ENCODE measurements at regions of chr6 and their contacts with region 1.

Region 1: DNA sequence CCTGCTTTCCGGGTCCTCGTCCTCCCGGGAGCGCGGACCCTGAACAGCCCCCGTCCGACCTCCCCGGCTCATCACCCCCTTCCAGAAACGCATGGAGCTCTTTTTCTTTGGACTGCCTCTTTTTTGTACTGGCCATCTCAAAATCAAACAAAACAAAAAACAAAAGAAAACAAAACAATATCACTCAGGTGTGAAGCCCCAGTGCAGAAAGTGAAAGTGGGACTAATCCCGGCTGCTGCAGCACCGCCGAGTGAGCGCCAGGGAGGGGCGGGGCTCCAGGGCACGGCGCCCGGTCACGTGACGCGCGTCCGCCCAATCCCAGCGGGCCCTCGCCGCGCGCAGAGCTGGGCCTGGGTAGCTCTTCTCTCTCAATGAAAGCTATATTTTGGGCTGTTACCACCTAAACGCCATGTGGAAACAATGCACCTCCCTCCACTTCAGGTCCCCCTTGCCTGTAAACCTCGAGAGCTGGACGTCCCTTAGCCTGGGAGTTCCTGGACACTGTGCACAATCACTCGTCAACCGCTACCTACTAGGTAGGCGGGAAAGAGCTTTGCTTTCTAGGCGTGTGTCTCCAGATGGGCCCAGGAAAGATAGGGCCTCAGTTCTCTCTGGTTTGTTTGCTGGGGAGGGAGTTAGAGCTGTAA is 93.7 kb upstream of the PRDM1 start:
- DNase-seq: peak; percentile 94
- ATAC-seq: peak; percentile 93
- H3K4me3 ChIP-seq: peak overlapping the region; percentile 81 to 96 (median 89)
- H3K4me3 Mint-ChIP-seq: peak overlapping the region; percentile 90
- H3K27ac ChIP-seq: peak overlapping the region; percentile 91
- H3K27ac Mint-ChIP-seq: peak overlapping the region; percentile 94
- H3K4me1 ChIP-seq: peaks cover 26 to 28% of the 10 kb centered on the region in 2 donors
- H3K4me1 Mint-ChIP-seq: peaks cover 26% of the 10 kb centered on the region
- H3K27me3 ChIP-seq: peaks cover 4 to 34% (median 22%) of the 10 kb centered on the region in 4 experiments
- H3K27me3 Mint-ChIP-seq: peaks cover 57% of the 10 kb centered on the region
- CTCF ChIP-seq: no peak

Region 2: DNA sequence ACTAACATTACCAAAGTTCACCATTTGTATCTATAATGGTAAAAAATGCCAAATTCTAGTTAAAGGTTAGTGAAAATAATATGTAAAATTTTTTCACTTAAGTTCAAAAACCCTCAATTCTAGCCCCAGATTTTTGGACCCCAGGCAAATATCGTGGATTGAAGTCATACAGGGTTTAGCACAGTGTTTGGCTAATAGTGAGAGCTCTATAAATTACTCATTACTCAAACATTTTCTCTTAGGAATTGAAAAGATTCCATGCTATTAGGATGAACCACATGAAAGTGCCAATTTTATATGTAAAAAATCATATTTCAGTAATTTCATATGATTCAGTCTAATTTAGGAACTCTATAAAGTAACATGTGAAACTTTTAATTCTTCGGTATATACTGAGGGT is 419.3 kb before region 1 on chr6:
- CTCF ChIA-PET with region 1: no interaction called
- POLR2A ChIA-PET with region 1: no interaction called
- intact Hi-C with region 1: no loop called
- DNase-seq: no peak
- ATAC-seq: no peak
- H3K4me3 ChIP-seq: no peak overlapping the region
- H3K4me3 Mint-ChIP-seq: no peak overlapping the region
- H3K27ac ChIP-seq: no peak overlapping the region
- H3K27ac Mint-ChIP-seq: no peak overlapping the region
- H3K4me1 ChIP-seq: no peaks in the 10 kb centered on the region
- H3K4me1 Mint-ChIP-seq: no peaks in the 10 kb centered on the region
- H3K27me3 ChIP-seq: peaks cover 0 to 4% (median 0%) of the 10 kb centered on the region in 4 experiments
- H3K27me3 Mint-ChIP-seq: peaks cover 23% of the 10 kb centered on the region
- CTCF ChIP-seq: no peak

Region 3: DNA sequence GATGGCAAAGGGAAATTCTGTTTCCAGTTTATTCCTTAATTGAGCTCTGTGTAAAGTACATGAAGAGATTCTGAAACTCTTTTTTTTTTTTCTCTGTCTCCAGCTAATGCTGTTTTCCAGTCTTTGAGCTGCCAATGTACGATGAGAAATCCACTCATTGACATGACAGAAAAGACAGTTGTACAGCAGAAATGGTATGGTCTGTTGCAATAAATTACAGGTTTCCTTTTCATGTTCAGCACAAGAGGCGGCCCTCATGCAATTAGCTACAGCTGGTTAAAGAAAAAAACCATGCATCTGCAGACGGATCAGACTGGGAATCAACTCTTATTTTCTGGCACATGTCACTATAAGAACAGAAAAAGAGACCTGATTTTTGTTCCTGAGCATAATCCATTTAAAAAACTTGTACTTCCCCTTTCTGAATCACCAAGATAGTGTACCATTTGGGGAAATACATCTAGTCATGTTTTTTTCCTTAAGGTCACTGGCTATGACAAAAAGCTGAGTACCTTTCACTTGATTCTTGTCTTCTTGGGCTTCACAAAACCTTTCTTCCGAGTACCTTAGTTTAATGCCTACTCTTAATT is 299.7 kb before region 1 on chr6:
- CTCF ChIA-PET with region 1: no interaction called
- POLR2A ChIA-PET with region 1: no interaction called
- intact Hi-C with region 1: no loop called
- DNase-seq: no peak
- ATAC-seq: no peak
- H3K4me3 ChIP-seq: no peak overlapping the region
- H3K4me3 Mint-ChIP-seq: no peak overlapping the region
- H3K27ac ChIP-seq: no peak overlapping the region
- H3K27ac Mint-ChIP-seq: no peak overlapping the region
- H3K4me1 ChIP-seq: no peaks in the 10 kb centered on the region
- H3K4me1 Mint-ChIP-seq: no peaks in the 10 kb centered on the region
- H3K27me3 ChIP-seq: peaks cover 0 to 3% (median 1%) of the 10 kb centered on the region in 4 experiments
- H3K27me3 Mint-ChIP-seq: peaks cover 14% of the 10 kb centered on the region
- CTCF ChIP-seq: no peak

Region 4: GRCh38 chr6:105733565-105734162 is 258.8 kb before region 1 on chr6:
- CTCF ChIA-PET with region 1: interaction called, 3 read pairs
- POLR2A ChIA-PET with region 1: no interaction called
- intact Hi-C with region 1: loop called (anchors 5 kb)
- DNase-seq: peak; percentile 50
- ATAC-seq: no peak
- H3K4me3 ChIP-seq: no peak overlapping the region
- H3K4me3 Mint-ChIP-seq: no peak overlapping the region
- H3K27ac ChIP-seq: no peak overlapping the region
- H3K27ac Mint-ChIP-seq: no peak overlapping the region
- H3K4me1 ChIP-seq: no peaks in the 10 kb centered on the region
- H3K4me1 Mint-ChIP-seq: no peaks in the 10 kb centered on the region
- H3K27me3 ChIP-seq: no peaks in the 10 kb centered on the region
- H3K27me3 Mint-ChIP-seq: no peaks in the 10 kb centered on the region
- CTCF ChIP-seq: peak; percentile 76

Region 5: GRCh38 chr6:105793130-105793529 is 199.3 kb before region 1 on chr6:
- CTCF ChIA-PET with region 1: interaction called, 4 read pairs
- POLR2A ChIA-PET with region 1: no interaction called
- intact Hi-C with region 1: loop called (anchors 2 kb)
- DNase-seq: peak; percentile 67
- ATAC-seq: peak; percentile 73
- H3K4me3 ChIP-seq: no peak overlapping the region
- H3K4me3 Mint-ChIP-seq: no peak overlapping the region
- H3K27ac ChIP-seq: no peak overlapping the region
- H3K27ac Mint-ChIP-seq: no peak overlapping the region
- H3K4me1 ChIP-seq: peaks cover 9 to 15% of the 10 kb centered on the region in 2 donors
- H3K4me1 Mint-ChIP-seq: peaks cover 22% of the 10 kb centered on the region
- H3K27me3 ChIP-seq: no peaks in the 10 kb centered on the region
- H3K27me3 Mint-ChIP-seq: no peaks in the 10 kb centered on the region
- CTCF ChIP-seq: peak; percentile 21

Region 6: DNA sequence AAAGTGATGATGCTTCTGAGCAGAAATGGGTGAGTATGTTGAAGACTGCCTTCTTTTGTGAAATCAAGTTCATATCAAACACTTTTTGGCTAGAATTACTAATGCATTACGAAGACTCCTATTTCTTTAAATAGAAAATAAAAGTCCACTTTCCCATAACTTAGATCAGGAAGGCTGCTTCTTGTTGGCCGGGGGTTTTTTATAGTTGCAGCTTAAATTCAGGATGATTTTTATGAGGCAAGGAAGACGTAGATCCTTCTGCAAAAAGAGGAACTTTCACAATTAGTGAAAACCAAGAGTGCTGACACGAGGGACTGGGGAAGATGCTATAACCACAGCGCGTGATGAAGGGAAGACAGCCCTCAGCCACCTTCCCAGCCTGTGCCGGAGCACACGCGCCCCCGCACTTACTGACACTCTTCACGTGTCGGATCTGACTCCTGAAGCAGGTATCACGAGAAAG is 112.4 kb before region 1 on chr6:
- CTCF ChIA-PET with region 1: no interaction called
- POLR2A ChIA-PET with region 1: no interaction called
- intact Hi-C with region 1: loop called (anchors 5 kb)
- DNase-seq: peak; percentile 84
- ATAC-seq: peak; percentile 61
- H3K4me3 ChIP-seq: peak overlapping the region in 4 of 5 experiments; percentile 3 to 37 (median 32)
- H3K4me3 Mint-ChIP-seq: peak overlapping the region; percentile 70
- H3K27ac ChIP-seq: peak overlapping the region in 1 of 2 donors; percentile 32
- H3K27ac Mint-ChIP-seq: no peak overlapping the region
- H3K4me1 ChIP-seq: peaks cover 55 to 62% of the 10 kb centered on the region in 2 donors
- H3K4me1 Mint-ChIP-seq: peaks cover 56% of the 10 kb centered on the region
- H3K27me3 ChIP-seq: no peaks in the 10 kb centered on the region
- H3K27me3 Mint-ChIP-seq: no peaks in the 10 kb centered on the region
- CTCF ChIP-seq: no peak

Region 7: GRCh38 chr6:105941621-105942412 is 50.6 kb before region 1 on chr6:
- CTCF ChIA-PET with region 1: no interaction called
- POLR2A ChIA-PET with region 1: no interaction called
- intact Hi-C with region 1: no loop called
- DNase-seq: no peak
- ATAC-seq: no peak
- H3K4me3 ChIP-seq: no peak overlapping the region
- H3K4me3 Mint-ChIP-seq: no peak overlapping the region
- H3K27ac ChIP-seq: no peak overlapping the region
- H3K27ac Mint-ChIP-seq: no peak overlapping the region
- H3K4me1 ChIP-seq: no peaks in the 10 kb centered on the region
- H3K4me1 Mint-ChIP-seq: no peaks in the 10 kb centered on the region
- H3K27me3 ChIP-seq: no peaks in the 10 kb centered on the region
- H3K27me3 Mint-ChIP-seq: peaks cover 24% of the 10 kb centered on the region
- CTCF ChIP-seq: no peak

Region 8: DNA sequence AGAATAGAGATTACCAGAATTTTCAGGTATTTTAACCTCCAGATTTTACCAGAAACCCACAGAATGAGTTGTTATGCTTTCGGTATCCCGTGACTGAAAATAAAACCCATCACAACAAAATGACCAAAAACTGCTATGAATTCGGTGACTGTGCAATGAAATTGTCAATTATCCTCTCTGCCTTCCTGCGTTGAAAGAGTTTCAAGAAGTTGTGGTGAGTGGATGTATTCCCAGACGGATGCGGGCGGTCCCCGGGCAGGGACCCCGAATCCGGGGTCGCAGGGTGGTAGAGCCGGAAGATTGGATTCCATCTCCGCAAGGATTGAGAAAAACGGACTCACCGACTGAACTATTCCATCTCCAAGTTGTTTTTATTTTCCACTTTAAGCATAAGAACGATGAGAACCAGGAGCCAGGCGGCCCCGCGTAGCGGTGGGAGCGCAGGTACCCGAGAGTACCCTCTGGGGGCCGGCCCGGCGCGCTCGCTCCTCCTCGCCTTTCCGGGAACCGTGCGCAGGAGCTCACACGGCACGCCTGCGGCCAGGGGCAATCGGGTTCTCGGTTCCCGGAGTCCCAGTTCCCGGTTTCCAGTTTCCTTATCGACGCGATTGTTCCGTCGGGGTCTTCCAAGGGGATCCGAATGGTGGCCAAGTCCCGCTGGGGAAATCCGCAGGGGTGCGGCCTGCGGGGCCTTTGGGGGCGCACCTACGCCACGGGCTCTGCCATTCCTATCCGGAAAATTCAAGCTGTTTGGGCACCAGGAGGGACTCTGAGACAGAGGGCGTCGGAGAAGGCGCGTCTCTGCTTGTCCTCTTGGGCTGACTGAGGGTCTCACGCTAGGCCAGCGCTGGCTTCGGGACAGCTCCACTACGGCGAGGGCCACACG is 11.2 kb before region 1 on chr6:
- CTCF ChIA-PET with region 1: interaction called, 7 read pairs
- POLR2A ChIA-PET with region 1: interaction called, 5 read pairs
- intact Hi-C with region 1: loop called (anchors 1 kb)
- DNase-seq: peak; percentile 55
- ATAC-seq: peak; percentile 56
- H3K4me3 ChIP-seq: peak overlapping the region; percentile 23 to 84 (median 50)
- H3K4me3 Mint-ChIP-seq: peak overlapping the region; percentile 88
- H3K27ac ChIP-seq: no peak overlapping the region
- H3K27ac Mint-ChIP-seq: peak overlapping the region; percentile 37
- H3K4me1 ChIP-seq: peaks cover 22 to 24% of the 10 kb centered on the region in 2 donors
- H3K4me1 Mint-ChIP-seq: peaks cover 16% of the 10 kb centered on the region
- H3K27me3 ChIP-seq: peaks cover 0 to 43% (median 33%) of the 10 kb centered on the region in 4 experiments
- H3K27me3 Mint-ChIP-seq: peaks cover 62% of the 10 kb centered on the region
- CTCF ChIP-seq: no peak

Region 9: DNA sequence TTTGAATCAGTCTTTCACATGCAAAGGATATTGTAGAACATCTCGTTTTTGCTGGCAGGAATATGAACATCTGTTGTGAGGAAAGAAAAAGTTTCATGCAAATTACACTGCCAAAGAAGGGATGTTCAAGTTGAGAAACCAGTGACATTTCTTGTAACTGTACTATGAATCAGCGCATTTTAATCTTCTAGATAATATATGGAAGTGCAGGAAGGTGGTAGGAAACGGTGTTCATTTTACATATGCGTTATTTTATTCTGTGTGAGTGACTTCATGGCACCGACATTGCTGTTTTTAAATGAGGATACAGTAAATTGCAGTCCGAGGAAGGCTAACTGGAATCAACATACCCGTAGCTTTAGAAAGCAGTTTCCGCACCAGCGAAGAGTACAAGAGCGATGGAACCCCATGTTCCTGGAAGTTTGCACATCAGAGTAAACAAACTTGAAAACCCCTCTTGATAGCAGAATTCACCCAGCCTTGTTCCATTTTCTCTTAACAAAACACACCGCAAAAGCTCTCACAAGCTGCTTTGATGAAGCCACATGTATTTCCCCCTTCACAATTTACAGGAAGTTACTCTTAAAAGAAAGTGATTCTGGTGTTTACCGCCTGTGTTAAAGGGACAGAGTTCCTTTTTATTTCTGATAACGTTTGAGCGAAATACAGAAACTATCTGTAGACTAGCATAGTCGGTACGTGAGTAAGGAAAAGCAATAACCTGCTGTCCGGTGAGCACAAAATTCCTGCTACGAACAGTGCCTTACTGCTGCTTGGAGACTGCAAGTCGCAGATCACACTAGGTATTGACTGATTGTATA is 105.2 kb after region 1 on chr6:
- CTCF ChIA-PET with region 1: interaction called, 12 read pairs
- POLR2A ChIA-PET with region 1: interaction called, 7 read pairs
- intact Hi-C with region 1: loop called (anchors 1 kb)
- DNase-seq: peak; percentile 82
- ATAC-seq: peak; percentile 74
- H3K4me3 ChIP-seq: peak overlapping the region; percentile 48 to 82 (median 71)
- H3K4me3 Mint-ChIP-seq: peak overlapping the region; percentile 98
- H3K27ac ChIP-seq: peak overlapping the region; percentile 66 to 88
- H3K27ac Mint-ChIP-seq: peak overlapping the region; percentile 96
- H3K4me1 ChIP-seq: peaks cover 20 to 31% of the 10 kb centered on the region in 2 donors
- H3K4me1 Mint-ChIP-seq: peaks cover 75% of the 10 kb centered on the region
- H3K27me3 ChIP-seq: no peaks in the 10 kb centered on the region
- H3K27me3 Mint-ChIP-seq: no peaks in the 10 kb centered on the region
- CTCF ChIP-seq: no peak

Region 10: DNA sequence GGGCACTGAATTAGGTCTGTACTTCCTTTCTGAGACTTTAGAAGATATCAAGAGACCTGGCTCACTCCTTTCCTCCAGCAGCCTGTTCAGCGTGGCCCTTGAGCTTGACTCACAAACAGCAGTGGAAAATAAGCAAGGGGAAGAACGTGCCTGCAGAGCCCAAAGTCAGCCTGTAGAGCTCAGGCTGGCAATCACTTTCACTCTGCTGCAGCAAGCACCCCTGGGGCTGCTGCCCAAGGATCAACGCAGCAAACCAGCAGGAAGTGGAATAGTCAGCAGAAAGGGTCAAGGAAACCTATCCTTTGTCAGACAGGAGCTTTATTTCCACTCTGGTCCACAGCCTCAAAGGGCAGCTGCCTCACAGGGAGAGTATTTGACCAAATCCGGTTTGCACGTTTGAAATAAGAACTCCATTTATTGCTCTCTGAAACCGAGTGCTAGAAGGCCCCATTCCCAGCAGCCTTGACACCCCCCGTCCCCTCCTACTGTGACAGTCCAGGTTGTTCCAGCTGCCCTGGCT is 171.1 kb after region 1 on chr6:
- CTCF ChIA-PET with region 1: interaction called, 3 read pairs
- POLR2A ChIA-PET with region 1: interaction called, 3 read pairs
- intact Hi-C with region 1: loop called (anchors 1 kb)
- DNase-seq: peak; percentile 68
- ATAC-seq: peak; percentile 66
- H3K4me3 ChIP-seq: peak overlapping the region in 4 of 5 experiments; percentile 21 to 48 (median 23)
- H3K4me3 Mint-ChIP-seq: peak overlapping the region; percentile 70
- H3K27ac ChIP-seq: peak overlapping the region; percentile 96 to 98
- H3K27ac Mint-ChIP-seq: peak overlapping the region; percentile 88
- H3K4me1 ChIP-seq: peaks cover 22 to 32% of the 10 kb centered on the region in 2 donors
- H3K4me1 Mint-ChIP-seq: peaks cover 31% of the 10 kb centered on the region
- H3K27me3 ChIP-seq: no peaks in the 10 kb centered on the region
- H3K27me3 Mint-ChIP-seq: no peaks in the 10 kb centered on the region
- CTCF ChIP-seq: peak; percentile 9

Region 11: GRCh38 chr6:107383705-107384104 is 1391.3 kb after region 1 on chr6:
- CTCF ChIA-PET with region 1: no interaction called
- POLR2A ChIA-PET with region 1: no interaction called
- intact Hi-C with region 1: no loop called
- DNase-seq: no peak
- ATAC-seq: no peak
- H3K4me3 ChIP-seq: no peak overlapping the region
- H3K4me3 Mint-ChIP-seq: no peak overlapping the region
- H3K27ac ChIP-seq: no peak overlapping the region
- H3K27ac Mint-ChIP-seq: no peak overlapping the region
- H3K4me1 ChIP-seq: no peaks in the 10 kb centered on the region
- H3K4me1 Mint-ChIP-seq: peaks cover 5% of the 10 kb centered on the region
- H3K27me3 ChIP-seq: no peaks in the 10 kb centered on the region
- H3K27me3 Mint-ChIP-seq: no peaks in the 10 kb centered on the region
- CTCF ChIP-seq: no peak

Measured in B cell (primary cell).